Activated T-helper 1 cell treated with anti-CD3 and anti-CD28 coated beads, Interleukin-12 subunit alpha, Interleukin-12 subunit beta, Interleukin-2, Interleukin-4 antibody, amounts not matched to agents 30 ng/mL and 10 ng/mL and 1 ng/mL, durations not matched to agents 14 hours and 24 hours and 36 hours (primary cell): ENCODE measurements at regions of chr1 and their contacts with region 1.

Region 1: DNA sequence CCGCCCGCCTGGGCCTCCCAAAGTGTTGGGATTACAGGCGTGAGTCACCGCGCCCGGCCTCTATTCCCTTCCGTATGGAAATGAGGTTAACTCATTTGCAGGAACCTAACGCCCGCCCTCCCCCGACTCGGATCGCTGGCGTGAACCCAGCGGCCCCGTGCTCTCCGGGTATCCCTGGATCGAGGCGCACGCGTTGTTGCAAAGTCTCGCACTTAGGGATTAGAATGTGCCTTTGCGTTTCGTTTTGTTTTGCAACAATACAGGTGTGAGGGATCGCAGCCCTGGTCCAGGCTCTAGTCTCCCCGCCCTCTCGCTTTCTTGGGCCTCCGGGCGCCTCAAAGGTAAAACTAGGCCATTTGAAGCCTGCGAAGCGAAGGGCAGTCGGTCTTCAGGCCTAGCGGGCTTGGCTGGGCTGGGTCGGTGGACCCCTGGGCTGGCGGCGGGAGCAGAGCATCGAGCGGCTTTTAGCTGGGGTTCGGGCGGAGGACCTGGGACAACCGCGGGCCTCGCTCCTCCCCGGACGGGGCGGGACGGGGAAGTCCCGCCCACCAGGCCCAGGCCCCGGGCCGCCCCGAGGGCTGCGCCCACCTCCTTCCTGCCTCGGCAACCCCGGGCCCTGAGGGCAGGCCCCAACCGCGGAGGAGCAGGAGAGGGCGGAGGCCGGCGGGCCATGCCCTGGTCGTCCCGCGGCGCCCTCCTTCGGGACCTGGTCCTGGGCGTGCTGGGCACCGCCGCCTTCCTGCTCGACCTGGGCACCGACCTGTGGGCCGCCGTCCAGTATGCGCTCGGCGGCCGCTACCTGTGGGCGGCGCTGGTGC is at the start of gene XKR8:
- DNase-seq: peak; percentile 84
- H3K4me3 Mint-ChIP-seq: peak within 1 kb of the TSS; percentile 87
- H3K27ac Mint-ChIP-seq: peak within 1 kb of the TSS; percentile 74
- H3K4me1 Mint-ChIP-seq: peaks cover 15% of the 10 kb centered on the region
- H3K27me3 Mint-ChIP-seq: no peaks in the 10 kb centered on the region
- total RNA-seq, gene XKR8: 5.7 and 5.8 TPM in 2 replicates

Region 2: GRCh38 chr1:27872059-27872801 is 87.4 kb before region 1 on chr1 and contains the start of gene THEMIS2:
- intact Hi-C with region 1: loop called (anchors 5 kb)
- DNase-seq: peak; percentile 70
- H3K4me3 Mint-ChIP-seq: peak within 1 kb of the TSS; percentile 94
- H3K27ac Mint-ChIP-seq: peak within 1 kb of the TSS; percentile 95
- H3K4me1 Mint-ChIP-seq: peaks cover 50% of the 10 kb centered on the region
- H3K27me3 Mint-ChIP-seq: no peaks in the 10 kb centered on the region
- total RNA-seq, gene THEMIS2: 28.7 and 33.5 TPM in 2 replicates